OCI-LY7 (cell line): ENCODE measurements at regions of chr1 and their contacts with region 1.

Region 1: DNA sequence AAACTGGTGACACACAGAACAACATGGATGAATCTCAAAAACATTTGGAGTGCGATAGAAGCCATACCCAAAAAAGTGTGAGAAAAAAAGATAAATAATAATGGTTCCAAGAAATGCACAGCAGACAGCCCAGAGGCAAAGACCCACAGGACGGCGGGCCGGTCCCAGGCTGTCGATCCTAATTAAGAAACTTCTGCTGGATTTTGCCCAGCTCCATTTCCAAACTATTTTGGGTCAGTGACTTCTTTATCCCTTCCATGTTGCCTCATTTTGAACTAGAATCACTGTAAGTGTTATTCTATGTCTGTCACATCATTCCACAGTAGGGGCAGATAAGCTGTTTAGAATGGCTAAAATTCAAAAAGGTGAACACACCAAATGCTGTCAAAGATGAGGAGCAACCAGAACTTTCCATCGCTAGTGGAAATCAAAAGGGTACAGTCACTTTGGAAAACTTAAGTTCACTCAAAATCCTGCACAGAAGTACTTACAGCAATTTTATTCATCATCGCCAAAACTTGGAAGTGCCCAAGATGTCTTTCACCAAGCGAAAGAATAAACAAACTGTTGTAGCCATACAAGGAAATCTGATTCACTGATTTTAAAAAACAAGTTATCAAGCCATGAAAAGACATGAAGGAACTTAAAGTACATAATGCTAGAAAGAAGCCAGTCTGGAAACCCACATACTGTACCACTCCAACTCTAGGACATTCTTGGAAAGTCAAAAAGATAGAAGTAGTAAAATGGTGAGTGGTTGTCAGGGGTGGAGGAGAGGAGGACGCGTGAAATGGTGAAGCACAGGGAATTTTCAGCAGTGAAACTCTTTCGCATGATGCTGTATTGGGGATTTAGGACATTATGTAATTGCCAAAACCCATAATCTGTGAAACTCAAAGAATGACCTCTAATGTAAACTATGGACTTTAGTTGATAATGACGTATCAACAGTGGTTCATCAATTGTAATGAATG is 7.5 kb downstream of the NBPF1 start:
- DNase-seq: no peak
- H3K4me3 ChIP-seq: no peak overlapping the region
- H3K27ac ChIP-seq: no peak overlapping the region
- H3K4me1 ChIP-seq: no peaks in the 10 kb centered on the region
- CTCF ChIP-seq: 0 out of 2 replicates have a peak, but pooled peaks have one; percentile 9

Region 2: GRCh38 chr1:16644193-16644481 is 38.3 kb after region 1 on chr1:
- CTCF ChIA-PET with region 1: no interaction called
- POLR2A ChIA-PET with region 1: interaction called, 3 read pairs
- intact Hi-C with region 1: loop called (anchors 2 kb)
- DNase-seq: no peak
- H3K4me3 ChIP-seq: peak overlapping the region; percentile 71
- H3K27ac ChIP-seq: peak overlapping the region; percentile 38
- H3K4me1 ChIP-seq: peaks cover 26% of the 10 kb centered on the region
- CTCF ChIP-seq: no peak